ENCODE measurements at regions of chr2 and their contacts with region 1.

Region 1: GRCh38 chr2:38581193-38582147 is 21.3 kb downstream of the HNRNPLL start:
- DNase-seq: peak in 3 of 5 donors; percentile 30 to 66 (median 43)
- ATAC-seq: peak; percentile 66 to 87 (median 82)
- H3K4me3 ChIP-seq: no peak overlapping the region
- H3K27ac ChIP-seq: no peak overlapping the region
- H3K4me1 ChIP-seq: peaks cover 0 to 22% (median 5%) of the 10 kb centered on the region in 12 donors
- H3K27me3 ChIP-seq: no peaks in the 10 kb centered on the region
- CTCF ChIP-seq: peak; percentile 48 to 82 (median 74)
- POLR2A ChIP-seq: no peak

Region 2: GRCh38 chr2:38523728-38524437 is 57.6 kb before region 1 on chr2:
- intact Hi-C with region 1: no loop called
- DNase-seq: no peak
- ATAC-seq: peak in 2 of 4 donors; percentile 29 to 35
- H3K4me3 ChIP-seq: no peak overlapping the region
- H3K27ac ChIP-seq: no peak overlapping the region
- H3K4me1 ChIP-seq: peaks cover 0 to 3% (median 0%) of the 10 kb centered on the region in 12 donors
- H3K27me3 ChIP-seq: peaks cover 0 to 10% (median 0%) of the 10 kb centered on the region in 9 donors
- CTCF ChIP-seq: peak in 2 of 12 donors; percentile 23 to 28
- POLR2A ChIP-seq: no peak

Region 3: DNA sequence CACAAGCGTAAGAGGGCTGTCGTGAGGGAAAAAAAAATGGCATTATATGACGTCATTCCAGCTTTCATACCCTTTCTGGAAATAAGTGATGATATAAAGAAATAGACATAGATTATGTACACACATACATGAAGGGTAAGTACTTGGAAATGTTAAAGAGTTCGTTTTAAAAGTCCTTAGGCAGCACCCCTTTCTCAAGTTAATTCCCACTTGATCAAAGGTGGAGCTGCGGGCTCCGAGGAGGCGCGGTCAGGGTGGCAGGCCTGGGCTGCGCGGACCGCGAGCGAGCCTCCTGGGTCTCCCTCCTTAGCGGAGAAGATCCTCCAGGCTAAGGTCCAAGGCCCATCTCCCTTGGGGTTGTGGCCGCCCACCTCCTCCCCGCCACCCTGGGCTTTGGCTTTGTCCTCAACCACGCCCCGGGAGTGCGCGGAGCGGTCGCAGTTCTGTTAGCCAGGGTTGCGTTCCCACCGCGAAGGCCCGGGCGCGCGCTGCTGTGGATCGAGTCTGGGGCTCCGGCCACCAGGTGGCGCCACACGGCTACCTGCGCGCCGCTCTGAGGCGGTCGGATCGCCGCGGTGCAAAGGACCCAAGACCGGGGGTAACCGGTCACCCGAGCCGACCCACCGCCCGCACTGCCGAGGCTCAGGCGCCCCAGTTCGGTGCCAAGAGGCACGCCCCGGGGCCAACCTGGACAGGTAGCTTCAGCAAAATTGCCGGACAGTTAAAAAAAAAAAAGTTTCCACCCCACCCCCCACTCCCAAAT is 45.5 kb before region 1 on chr2:
- intact Hi-C with region 1: loop called in 1 of 10 experiments (anchors 5 kb)
- DNase-seq: peak; percentile 78 to 93 (median 84)
- ATAC-seq: peak; percentile 91 to 96 (median 94)
- H3K4me3 ChIP-seq: peak overlapping the region in 11 of 12 donors; percentile 28 to 67 (median 51)
- H3K27ac ChIP-seq: peak overlapping the region in 1 of 12 donors; percentile 84
- H3K4me1 ChIP-seq: peaks cover 0 to 11% (median 0%) of the 10 kb centered on the region in 12 donors
- H3K27me3 ChIP-seq: no peaks in the 10 kb centered on the region
- CTCF ChIP-seq: peak; percentile 82 to 97 (median 92)
- POLR2A ChIP-seq: no peak

Region 4: GRCh38 chr2:38720613-38721241 is 139.3 kb after region 1 on chr2:
- intact Hi-C with region 1: loop called in 7 of 10 experiments (anchors 1 to 5 kb)
- DNase-seq: peak; percentile 75 to 84 (median 80)
- ATAC-seq: peak; percentile 86 to 95 (median 94)
- H3K4me3 ChIP-seq: no peak overlapping the region
- H3K27ac ChIP-seq: peak overlapping the region; percentile 2 to 76 (median 48)
- H3K4me1 ChIP-seq: peaks cover 0 to 35% (median 21%) of the 10 kb centered on the region in 12 donors
- H3K27me3 ChIP-seq: no peaks in the 10 kb centered on the region
- CTCF ChIP-seq: no peak
- POLR2A ChIP-seq: no peak

Region 5: DNA sequence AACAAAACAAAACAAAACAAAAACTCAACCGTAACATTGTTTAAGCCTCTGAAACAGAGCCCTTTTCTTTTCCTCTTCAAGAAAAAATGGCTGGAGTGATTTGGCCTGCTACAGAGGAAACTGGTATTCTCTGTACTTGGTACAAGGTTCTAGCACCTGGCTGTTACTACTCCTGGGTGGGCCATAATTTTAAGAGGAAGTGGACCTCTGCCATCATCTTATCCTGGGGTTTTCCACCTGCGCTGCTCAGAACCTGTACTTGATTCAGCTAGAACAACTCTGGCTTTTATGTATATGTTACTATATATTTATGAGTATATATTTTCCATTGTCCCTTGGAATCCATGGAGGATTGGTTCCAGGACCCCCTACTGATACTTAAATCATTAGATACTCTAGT is 147.2 kb after region 1 on chr2:
- intact Hi-C with region 1: loop called in 9 of 10 experiments (anchors 1 to 5 kb)
- DNase-seq: no peak
- ATAC-seq: no peak
- H3K4me3 ChIP-seq: no peak overlapping the region
- H3K27ac ChIP-seq: no peak overlapping the region
- H3K4me1 ChIP-seq: peaks cover 0 to 13% (median 0%) of the 10 kb centered on the region in 12 donors
- H3K27me3 ChIP-seq: no peaks in the 10 kb centered on the region
- CTCF ChIP-seq: no peak
- POLR2A ChIP-seq: no peak

Region 6: GRCh38 chr2:38734299-38735058 is 153.0 kb after region 1 on chr2:
- intact Hi-C with region 1: loop called in 3 of 10 experiments (anchors 5 kb)
- DNase-seq: peak in 2 of 5 donors; percentile 37 to 45
- ATAC-seq: peak in 2 of 4 donors; percentile 32 to 63
- H3K4me3 ChIP-seq: no peak overlapping the region
- H3K27ac ChIP-seq: peak overlapping the region in 3 of 12 donors; percentile 2 to 54 (median 16)
- H3K4me1 ChIP-seq: peaks cover 0 to 29% (median 11%) of the 10 kb centered on the region in 12 donors
- H3K27me3 ChIP-seq: no peaks in the 10 kb centered on the region
- CTCF ChIP-seq: no peak
- POLR2A ChIP-seq: no peak

Region 7: GRCh38 chr2:38740851-38741731 is 159.6 kb after region 1 on chr2:
- intact Hi-C with region 1: loop called in 7 of 10 experiments (anchors 1 to 5 kb)
- DNase-seq: no peak
- ATAC-seq: peak in 2 of 4 donors; percentile 17 to 59
- H3K4me3 ChIP-seq: peak overlapping the region in 2 of 12 donors; percentile 13 to 20
- H3K27ac ChIP-seq: peak overlapping the region in 6 of 12 donors; percentile 3 to 75 (median 16)
- H3K4me1 ChIP-seq: peaks cover 0 to 48% (median 9%) of the 10 kb centered on the region in 12 donors
- H3K27me3 ChIP-seq: no peaks in the 10 kb centered on the region
- CTCF ChIP-seq: peak; percentile 52 to 83 (median 68)
- POLR2A ChIP-seq: no peak

Measured in heart left ventricle (tissue), 16 donors.